ENCODE measurements at regions of chr1 and their contacts with region 1.

Region 1: DNA sequence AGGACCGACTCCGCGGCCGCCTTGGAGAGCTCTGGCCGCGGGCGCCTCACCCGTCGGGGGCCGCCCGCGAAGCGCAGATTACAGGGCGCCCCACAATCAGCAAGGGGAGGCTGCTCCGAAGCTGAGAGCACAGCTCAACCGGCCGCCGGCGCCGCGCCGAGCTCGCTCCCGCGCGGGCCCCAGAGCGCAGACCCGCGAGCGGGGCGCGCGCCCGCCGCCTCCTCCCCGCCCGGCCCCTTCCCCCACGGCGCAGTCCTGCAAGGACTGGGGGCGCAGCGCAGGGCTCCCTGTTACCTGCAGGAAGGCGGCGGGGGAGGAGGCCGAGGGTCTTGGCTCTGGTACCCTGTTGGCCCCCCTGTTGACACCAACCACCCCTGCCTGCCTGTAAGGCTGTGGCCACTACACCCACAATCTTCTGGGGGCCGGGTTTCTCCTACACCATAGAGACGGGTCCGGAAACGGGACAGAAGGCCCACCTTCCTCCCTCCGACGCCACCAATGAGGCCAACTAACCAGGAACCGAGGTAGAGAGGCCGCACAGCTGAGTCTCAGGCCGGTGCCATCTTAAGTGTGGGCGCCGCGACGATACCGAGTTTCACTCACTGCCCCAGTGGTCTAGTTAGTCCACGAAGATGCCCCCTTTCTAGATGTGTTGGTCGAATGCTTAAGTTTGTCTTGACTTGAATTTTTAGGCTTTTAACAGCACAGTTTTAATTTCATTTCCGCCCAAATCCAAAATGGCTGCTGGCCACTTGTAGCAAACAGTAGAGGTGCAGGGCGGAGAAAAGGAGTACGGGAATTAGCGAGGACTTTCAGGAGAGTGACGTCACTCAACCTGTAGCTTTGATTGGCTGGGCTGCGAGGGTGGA is at the start of gene SCYL3:
- DNase-seq: peak; percentile 85 to 97 (median 95)
- ATAC-seq: peak; percentile 92
- H3K4me3 ChIP-seq: peak within 1 kb of the TSS; percentile 77
- H3K4me3 Mint-ChIP-seq: peak within 1 kb of the TSS; percentile 85 to 97 (median 94)
- H3K27ac ChIP-seq: peak within 1 kb of the TSS; percentile 95
- H3K27ac Mint-ChIP-seq: peak within 1 kb of the TSS; percentile 98 to 100 (median 100)
- H3K4me1 ChIP-seq: peaks cover 25 to 28% of the 10 kb centered on the region in 2 donors
- H3K4me1 Mint-ChIP-seq: peaks cover 26 to 51% (median 46%) of the 10 kb centered on the region in 7 donors
- H3K27me3 ChIP-seq: no peaks in the 10 kb centered on the region
- H3K27me3 Mint-ChIP-seq: peaks cover 0 to 18% (median 4%) of the 10 kb centered on the region in 5 donors
- total RNA-seq, gene SCYL3: 9.5 to 22.7 (median 17.3) TPM

Region 2: GRCh38 chr1:168178638-168179437 is 1714.9 kb before region 1 on chr1 and contains the start of gene TIPRL:
- CTCF ChIA-PET with region 1: no interaction called
- POLR2A ChIA-PET with region 1: interaction called, 3 read pairs
- intact Hi-C with region 1: loop called in 1 of 2 experiments (anchors 5 kb)
- DNase-seq: peak; percentile 88 to 94 (median 93)
- ATAC-seq: peak; percentile 95
- H3K4me3 ChIP-seq: peak within 1 kb of the TSS; percentile 80
- H3K4me3 Mint-ChIP-seq: no peak within 1 kb of the TSS
- H3K27ac ChIP-seq: peak within 1 kb of the TSS; percentile 96
- H3K27ac Mint-ChIP-seq: no peak within 1 kb of the TSS
- H3K4me1 ChIP-seq: peaks cover 14 to 16% of the 10 kb centered on the region in 2 donors
- H3K4me1 Mint-ChIP-seq: peaks cover 3 to 20% (median 9%) of the 10 kb centered on the region in 7 donors
- H3K27me3 ChIP-seq: no peaks in the 10 kb centered on the region
- H3K27me3 Mint-ChIP-seq: peaks cover 2 to 9% (median 2%) of the 10 kb centered on the region in 5 donors
- total RNA-seq, gene TIPRL: 17.2 to 41.2 (median 23.5) TPM

Region 3: DNA sequence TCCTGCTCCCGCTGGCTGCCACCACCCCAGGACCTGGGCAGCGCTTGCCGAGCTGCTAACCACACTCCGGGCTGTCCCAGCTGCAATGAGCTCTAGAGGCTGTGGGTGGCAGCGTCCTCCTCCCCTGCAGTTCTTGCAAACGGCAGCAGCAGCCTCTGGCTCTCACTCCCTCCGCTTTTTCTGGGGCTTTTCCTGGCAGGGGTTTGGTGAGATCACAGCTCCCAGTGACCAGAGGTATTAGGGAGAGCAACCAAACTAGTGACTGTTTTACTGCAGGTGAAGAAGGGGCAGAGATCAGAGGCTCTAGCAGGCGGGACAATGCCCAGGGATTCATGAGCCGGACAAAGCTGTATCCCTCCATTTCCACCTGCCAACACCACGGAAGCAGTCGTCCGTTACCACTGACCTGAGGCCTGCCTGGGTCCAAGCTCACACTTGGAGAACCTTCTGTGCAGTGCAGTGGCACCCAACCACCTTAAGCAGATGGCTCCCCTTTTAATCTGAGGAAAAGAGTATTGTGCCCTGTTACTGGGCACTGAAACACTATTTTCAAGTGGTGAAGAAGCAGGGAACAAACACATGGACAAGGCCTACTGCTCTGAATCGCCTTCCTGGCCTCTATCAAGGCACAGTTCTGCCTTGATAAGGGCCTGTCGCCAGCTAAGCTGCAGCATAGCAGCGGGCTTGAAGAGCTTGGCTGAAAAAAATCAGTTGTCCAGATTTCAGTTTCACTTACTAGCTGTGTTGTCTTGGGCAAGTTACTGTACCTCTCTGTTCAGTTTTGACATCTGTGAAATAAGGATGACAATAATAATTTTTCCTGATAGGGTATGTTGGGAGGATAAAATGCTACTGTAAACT is 307.1 kb before region 1 on chr1 and contains the start of gene F5:
- CTCF ChIA-PET with region 1: no interaction called
- POLR2A ChIA-PET with region 1: no interaction called
- intact Hi-C with region 1: loop called in 1 of 2 experiments (anchors 5 kb)
- DNase-seq: peak; percentile 53 to 78 (median 74)
- ATAC-seq: peak; percentile 98
- H3K4me3 ChIP-seq: peak within 1 kb of the TSS; percentile 47
- H3K4me3 Mint-ChIP-seq: peak within 1 kb of the TSS; percentile 81 to 93 (median 90)
- H3K27ac ChIP-seq: peak within 1 kb of the TSS; percentile 66
- H3K27ac Mint-ChIP-seq: peak within 1 kb of the TSS; percentile 50 to 94 (median 86)
- H3K4me1 ChIP-seq: peaks cover 10 to 14% of the 10 kb centered on the region in 2 donors
- H3K4me1 Mint-ChIP-seq: peaks cover 18 to 71% (median 53%) of the 10 kb centered on the region in 7 donors
- H3K27me3 ChIP-seq: no peaks in the 10 kb centered on the region
- H3K27me3 Mint-ChIP-seq: peaks cover 0 to 4% (median 0%) of the 10 kb centered on the region in 5 donors
- total RNA-seq, gene F5: 3.7 to 14.6 (median 5.7) TPM

Region 4: DNA sequence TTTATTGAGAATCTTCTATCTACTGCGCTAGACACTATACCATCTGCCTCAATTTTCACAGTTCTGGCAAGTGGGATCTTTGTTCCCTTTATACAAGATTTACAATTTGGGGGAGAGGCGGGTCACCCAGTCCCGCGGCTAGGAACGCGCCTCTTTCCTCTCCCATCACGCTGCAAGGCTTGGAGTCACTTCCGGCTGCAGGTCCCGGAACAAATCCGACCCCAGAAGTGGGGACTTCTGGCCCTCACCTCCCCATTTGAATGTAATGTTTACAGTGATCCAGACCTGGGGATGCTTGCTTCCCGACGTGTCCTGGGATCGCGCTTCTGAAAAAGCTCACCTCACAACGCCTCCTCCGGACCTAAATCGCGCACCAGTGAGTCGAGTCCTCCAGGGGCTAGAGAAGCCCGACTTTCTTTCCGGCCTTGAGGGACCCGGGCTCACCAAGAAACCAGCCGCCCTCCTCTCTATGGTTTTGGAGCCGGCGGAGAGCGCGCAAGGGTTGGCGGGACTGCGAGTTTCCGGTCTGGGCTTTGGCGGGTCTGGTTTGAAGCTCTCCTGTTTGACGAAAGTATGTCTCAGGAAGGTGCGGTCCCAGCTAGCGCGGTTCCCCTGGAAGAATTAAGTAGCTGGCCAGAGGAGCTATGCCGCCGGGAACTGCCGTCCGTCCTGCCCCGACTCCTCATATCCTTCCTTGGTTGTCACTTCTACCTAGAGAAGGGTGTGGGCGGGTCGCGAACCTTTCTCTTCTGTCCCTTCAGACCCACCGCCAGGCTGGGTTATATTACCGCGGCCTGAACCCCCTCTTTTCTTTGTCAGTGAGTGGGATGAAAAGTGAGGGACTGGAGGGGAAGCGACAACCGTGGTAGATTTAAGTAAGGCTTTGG is 99.0 kb before region 1 on chr1 and contains the start of gene METTL18:
- CTCF ChIA-PET with region 1: no interaction called
- POLR2A ChIA-PET with region 1: interaction called, 21 read pairs
- intact Hi-C with region 1: loop called (anchors 1 kb)
- DNase-seq: peak; percentile 72 to 96 (median 92)
- ATAC-seq: peak; percentile 100
- H3K4me3 ChIP-seq: peak within 1 kb of the TSS; percentile 98
- H3K4me3 Mint-ChIP-seq: peak within 1 kb of the TSS; percentile 90 to 100 (median 100)
- H3K27ac ChIP-seq: peak within 1 kb of the TSS; percentile 94
- H3K27ac Mint-ChIP-seq: peak within 1 kb of the TSS; percentile 97 to 100 (median 99)
- H3K4me1 ChIP-seq: peaks cover 10 to 28% of the 10 kb centered on the region in 2 donors
- H3K4me1 Mint-ChIP-seq: peaks cover 26 to 60% (median 56%) of the 10 kb centered on the region in 7 donors
- H3K27me3 ChIP-seq: no peaks in the 10 kb centered on the region
- H3K27me3 Mint-ChIP-seq: no peaks in the 10 kb centered on the region
- total RNA-seq, gene METTL18: 4.9 to 21.1 (median 13.4) TPM

Region 5: GRCh38 chr1:169928438-169929209 is 34.9 kb after region 1 on chr1:
- CTCF ChIA-PET with region 1: no interaction called
- POLR2A ChIA-PET with region 1: no interaction called
- intact Hi-C with region 1: loop called in 1 of 2 experiments (anchors 1 kb)
- DNase-seq: peak in 7 of 9 donors; percentile 12 to 61 (median 44)
- ATAC-seq: peak; percentile 78
- H3K4me3 ChIP-seq: no peak overlapping the region
- H3K4me3 Mint-ChIP-seq: no peak overlapping the region
- H3K27ac ChIP-seq: no peak overlapping the region
- H3K27ac Mint-ChIP-seq: peak overlapping the region in 1 of 9 donors; percentile 36
- H3K4me1 ChIP-seq: no peaks in the 10 kb centered on the region
- H3K4me1 Mint-ChIP-seq: peaks cover 3 to 6% (median 5%) of the 10 kb centered on the region in 7 donors
- H3K27me3 ChIP-seq: no peaks in the 10 kb centered on the region
- H3K27me3 Mint-ChIP-seq: no peaks in the 10 kb centered on the region

Region 6: GRCh38 chr1:171313835-171314320 is 1420.2 kb after region 1 on chr1 and contains the start of gene FMO4:
- CTCF ChIA-PET with region 1: no interaction called
- POLR2A ChIA-PET with region 1: interaction called, 4 read pairs
- intact Hi-C with region 1: loop called in 1 of 2 experiments (anchors 10 kb)
- DNase-seq: peak; percentile 35 to 94 (median 90)
- ATAC-seq: peak; percentile 100
- H3K4me3 ChIP-seq: peak within 1 kb of the TSS; percentile 26
- H3K4me3 Mint-ChIP-seq: peak within 1 kb of the TSS; percentile 35 to 86 (median 81)
- H3K27ac ChIP-seq: peak within 1 kb of the TSS; percentile 56
- H3K27ac Mint-ChIP-seq: peak within 1 kb of the TSS; percentile 73 to 96 (median 90)
- H3K4me1 ChIP-seq: peaks cover 5 to 7% of the 10 kb centered on the region in 2 donors
- H3K4me1 Mint-ChIP-seq: peaks cover 4 to 34% (median 26%) of the 10 kb centered on the region in 7 donors
- H3K27me3 ChIP-seq: no peaks in the 10 kb centered on the region
- H3K27me3 Mint-ChIP-seq: no peaks in the 10 kb centered on the region
- total RNA-seq, gene FMO4: 1.2 to 3.7 (median 3.3) TPM

Region 7: DNA sequence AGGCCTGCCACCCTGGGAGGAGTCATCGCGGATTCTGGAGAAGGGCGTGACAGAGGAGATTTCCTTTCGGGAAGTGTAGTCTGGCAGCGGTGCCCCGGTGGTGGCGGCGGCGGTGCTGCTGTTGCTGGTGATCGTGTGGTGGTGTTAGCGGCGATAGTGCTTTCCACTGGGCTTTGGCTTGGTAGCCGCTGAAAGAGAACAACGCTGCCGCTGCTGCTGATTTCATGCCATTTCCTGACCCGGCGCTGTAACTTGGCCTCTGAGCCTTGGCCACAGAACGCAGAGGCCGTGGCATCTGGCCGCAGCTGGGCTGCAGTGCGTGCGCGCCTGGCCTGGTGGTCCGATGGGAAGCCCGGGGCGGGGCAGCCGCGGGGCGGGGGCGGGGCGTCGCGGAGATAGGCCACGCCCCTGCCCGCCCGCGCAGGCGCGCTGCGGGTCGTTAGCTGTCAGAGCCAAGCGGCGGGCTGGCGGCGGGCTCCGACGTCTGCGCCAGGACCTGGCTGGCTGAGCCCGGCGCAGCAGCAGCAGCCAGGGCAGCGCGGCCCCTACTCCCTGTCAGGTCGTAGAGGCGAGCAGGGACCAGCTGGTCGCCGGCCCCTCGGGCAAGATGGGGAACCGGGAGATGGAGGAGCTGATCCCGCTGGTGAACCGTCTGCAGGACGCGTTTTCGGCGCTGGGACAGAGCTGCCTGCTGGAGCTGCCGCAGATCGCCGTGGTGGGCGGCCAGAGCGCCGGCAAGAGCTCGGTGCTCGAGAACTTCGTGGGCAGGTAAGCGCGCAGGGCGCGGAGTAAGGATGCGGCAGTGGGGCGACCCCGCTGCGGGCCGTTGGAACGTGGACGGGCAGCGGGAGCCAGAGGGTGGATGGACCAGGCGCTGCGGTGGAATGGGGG is 1947.6 kb after region 1 on chr1 and contains the start of gene DNM3:
- CTCF ChIA-PET with region 1: no interaction called
- POLR2A ChIA-PET with region 1: no interaction called
- intact Hi-C with region 1: loop called in 1 of 2 experiments (anchors 5 kb)
- DNase-seq: peak; percentile 71 to 90 (median 86)
- ATAC-seq: peak; percentile 97
- H3K4me3 ChIP-seq: peak within 1 kb of the TSS; percentile 80
- H3K4me3 Mint-ChIP-seq: peak within 1 kb of the TSS; percentile 85 to 93 (median 90)
- H3K27ac ChIP-seq: peak within 1 kb of the TSS; percentile 64
- H3K27ac Mint-ChIP-seq: peak within 1 kb of the TSS; percentile 76 to 95 (median 83)
- H3K4me1 ChIP-seq: peaks cover 0 to 6% of the 10 kb centered on the region in 2 donors
- H3K4me1 Mint-ChIP-seq: peaks cover 15 to 19% (median 18%) of the 10 kb centered on the region in 7 donors
- H3K27me3 ChIP-seq: peaks cover 3 to 16% of the 10 kb centered on the region in 2 donors
- H3K27me3 Mint-ChIP-seq: peaks cover 12 to 44% (median 16%) of the 10 kb centered on the region in 5 donors
- total RNA-seq, gene DNM3: 1.9 to 2.5 (median 2.1) TPM

Measured in naive thymus-derived CD4-positive, alpha-beta T cell (primary cell).